Brain microvascular endothelial cell (primary cell): ENCODE measurements at regions of chr6 and their contacts with region 1.

Region 1: DNA sequence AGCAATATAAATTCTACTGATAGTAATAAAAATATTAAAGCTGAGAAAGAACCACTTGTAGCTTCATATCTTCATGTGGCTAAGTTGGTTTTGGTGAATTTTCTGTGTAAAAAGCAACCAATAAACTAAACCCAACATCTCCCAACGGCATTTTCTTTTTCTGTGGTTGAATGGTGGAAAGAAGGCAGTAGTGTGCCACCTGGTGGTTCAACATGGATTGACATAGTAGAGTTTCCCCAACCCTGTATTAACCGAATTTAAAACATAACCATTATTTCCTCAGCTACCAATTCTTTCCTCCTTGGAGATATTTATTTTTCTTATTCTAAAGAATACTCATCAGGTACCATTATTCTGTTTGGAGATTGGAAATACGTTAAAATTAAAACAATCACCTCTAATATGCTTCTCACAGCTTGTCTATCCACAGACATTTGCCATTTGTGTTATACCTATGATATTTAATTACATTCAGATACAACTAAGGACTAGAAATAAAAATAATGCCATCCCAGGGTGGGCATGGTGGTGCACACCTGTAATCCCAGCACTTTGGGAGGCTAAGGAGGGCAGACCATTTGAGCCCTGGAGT is 117.1 kb upstream of the EEF1E1 start:
- DNase-seq: peak; percentile 53
- H3K4me3 ChIP-seq: no peak overlapping the region
- H3K27ac ChIP-seq: no peak overlapping the region
- H3K27me3 ChIP-seq: no peaks in the 10 kb centered on the region
- CTCF ChIP-seq: peak; percentile 70

Region 2: DNA sequence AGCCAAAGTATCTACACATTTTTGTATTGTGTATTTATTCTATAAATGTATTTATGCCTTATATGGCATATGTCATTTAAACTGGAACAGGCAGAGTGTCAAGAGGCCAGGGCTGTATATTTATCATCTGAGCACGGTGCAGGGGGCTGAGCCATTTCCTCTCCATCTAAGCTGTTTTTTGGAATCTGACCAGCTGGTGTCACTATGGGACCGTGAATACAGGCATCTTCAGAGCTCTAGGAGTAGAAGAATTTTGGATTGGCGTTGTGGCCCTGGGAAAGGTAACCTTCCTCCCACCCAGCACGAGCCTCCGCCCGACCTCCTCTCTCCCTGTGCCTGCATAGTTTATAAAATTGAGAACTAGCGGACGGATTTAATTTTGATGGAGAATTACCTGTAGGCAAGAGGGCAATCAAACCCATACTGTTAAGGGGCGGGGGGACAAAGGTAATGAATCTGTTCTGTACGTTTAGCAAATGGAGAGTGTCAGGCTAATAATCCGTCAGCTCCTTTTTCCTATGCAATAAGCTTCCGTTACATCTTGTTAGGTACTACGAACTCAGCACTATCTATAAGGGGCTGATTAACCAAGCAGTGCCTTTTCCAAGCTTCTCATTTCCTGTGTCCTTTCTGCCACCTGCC is 88.1 kb before region 1 on chr6:
- in situ Hi-C with region 1: loop called (anchors 10 kb)
- DNase-seq: peak; percentile 66
- H3K4me3 ChIP-seq: no peak overlapping the region
- H3K27ac ChIP-seq: no peak overlapping the region
- H3K27me3 ChIP-seq: no peaks in the 10 kb centered on the region
- CTCF ChIP-seq: peak; percentile 74